BJ (cell line): ENCODE measurements at regions of chr10 and their contacts with region 1.

Region 1: GRCh38 chr10:67836491-67836890 is 1.5 kb downstream of the DNAJC12 start:
- DNase-seq: no peak
- H3K4me3 ChIP-seq: no peak overlapping the region
- H3K27me3 ChIP-seq: no peaks in the 10 kb centered on the region
- CTCF ChIP-seq: no peak

Region 2: GRCh38 chr10:67705921-67706320 is 130.6 kb before region 1 on chr10:
- CTCF ChIA-PET with region 1: no interaction called
- POLR2A ChIA-PET with region 1: no interaction called
- DNase-seq: no peak
- H3K4me3 ChIP-seq: no peak overlapping the region
- H3K27me3 ChIP-seq: no peaks in the 10 kb centered on the region
- CTCF ChIP-seq: no peak

Region 3: DNA sequence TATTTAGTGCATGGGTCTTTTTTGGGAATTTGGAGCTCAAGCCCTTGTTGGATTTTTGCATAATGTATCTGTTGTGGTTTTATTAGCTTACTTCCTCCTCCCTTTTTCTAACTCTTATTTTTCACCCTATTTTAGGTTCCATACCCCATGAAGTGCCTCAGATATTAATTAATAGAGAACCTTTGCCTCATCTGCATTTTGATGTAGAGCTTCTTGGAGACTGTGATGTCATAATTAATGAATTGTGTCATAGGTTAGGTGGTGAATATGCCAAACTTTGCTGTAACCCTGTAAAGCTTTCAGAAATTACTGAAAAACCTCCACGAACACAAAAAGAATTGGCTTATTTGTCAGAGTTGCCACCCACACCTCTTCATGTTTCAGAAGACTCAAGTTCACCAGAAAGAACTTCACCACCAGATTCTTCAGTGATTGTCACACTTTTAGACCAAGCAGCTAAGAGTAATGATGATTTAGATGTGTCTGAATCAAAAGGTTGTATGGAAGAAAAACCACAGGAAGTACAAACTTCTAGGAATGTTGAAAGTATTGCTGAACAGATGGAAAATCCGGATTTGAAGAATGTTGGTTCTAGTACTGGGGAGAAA is 76.0 kb after region 1 on chr10:
- CTCF ChIA-PET with region 1: no interaction called
- POLR2A ChIA-PET with region 1: interaction called, 16 read pairs
- DNase-seq: no peak
- H3K4me3 ChIP-seq: no peak overlapping the region
- H3K27me3 ChIP-seq: no peaks in the 10 kb centered on the region
- CTCF ChIP-seq: no peak

Region 4: GRCh38 chr10:67976292-67977245 is 140.1 kb after region 1 on chr10:
- CTCF ChIA-PET with region 1: no interaction called
- POLR2A ChIA-PET with region 1: no interaction called
- DNase-seq: no peak
- H3K4me3 ChIP-seq: no peak overlapping the region
- H3K27me3 ChIP-seq: no peaks in the 10 kb centered on the region
- CTCF ChIP-seq: no peak